Left colon (tissue), 2 donors: ENCODE measurements at regions of chr14 and their contacts with region 1.

Region 1: DNA sequence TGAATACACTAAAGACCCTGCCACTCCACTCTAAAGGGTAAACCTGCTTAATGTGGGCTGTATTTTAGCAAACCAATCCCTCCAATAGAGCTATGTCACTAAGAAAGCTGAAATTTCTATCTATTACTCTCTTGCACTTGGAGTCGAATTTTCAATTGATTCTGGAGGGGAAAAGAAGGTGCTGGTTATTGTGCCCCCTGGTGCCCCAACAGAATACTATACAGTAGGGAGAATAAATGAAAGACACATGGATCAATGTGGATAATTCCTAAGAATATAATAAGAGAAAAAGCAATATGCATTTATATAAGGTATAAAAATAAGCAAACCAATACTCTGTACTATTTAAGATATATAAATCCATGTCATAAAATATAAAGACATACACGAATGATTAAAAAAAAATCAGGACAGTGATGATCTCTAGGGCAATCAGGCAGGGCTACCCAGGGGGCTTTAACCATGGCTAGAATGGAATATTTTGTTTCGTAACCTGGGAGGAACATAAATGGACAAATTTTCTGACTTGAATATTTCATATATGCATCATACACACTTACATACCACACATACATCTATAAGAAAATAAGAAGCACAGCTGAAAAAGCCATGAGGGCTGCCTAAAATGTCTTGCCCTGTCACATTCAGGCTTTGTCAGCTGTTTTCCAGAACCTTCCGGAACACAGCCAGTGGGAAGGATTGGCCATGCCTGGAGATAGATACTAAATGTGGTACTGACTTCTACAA is 54.4 kb downstream of the EFCAB11 start:
- DNase-seq: no peak
- ATAC-seq: peak; percentile 59

Region 2: DNA sequence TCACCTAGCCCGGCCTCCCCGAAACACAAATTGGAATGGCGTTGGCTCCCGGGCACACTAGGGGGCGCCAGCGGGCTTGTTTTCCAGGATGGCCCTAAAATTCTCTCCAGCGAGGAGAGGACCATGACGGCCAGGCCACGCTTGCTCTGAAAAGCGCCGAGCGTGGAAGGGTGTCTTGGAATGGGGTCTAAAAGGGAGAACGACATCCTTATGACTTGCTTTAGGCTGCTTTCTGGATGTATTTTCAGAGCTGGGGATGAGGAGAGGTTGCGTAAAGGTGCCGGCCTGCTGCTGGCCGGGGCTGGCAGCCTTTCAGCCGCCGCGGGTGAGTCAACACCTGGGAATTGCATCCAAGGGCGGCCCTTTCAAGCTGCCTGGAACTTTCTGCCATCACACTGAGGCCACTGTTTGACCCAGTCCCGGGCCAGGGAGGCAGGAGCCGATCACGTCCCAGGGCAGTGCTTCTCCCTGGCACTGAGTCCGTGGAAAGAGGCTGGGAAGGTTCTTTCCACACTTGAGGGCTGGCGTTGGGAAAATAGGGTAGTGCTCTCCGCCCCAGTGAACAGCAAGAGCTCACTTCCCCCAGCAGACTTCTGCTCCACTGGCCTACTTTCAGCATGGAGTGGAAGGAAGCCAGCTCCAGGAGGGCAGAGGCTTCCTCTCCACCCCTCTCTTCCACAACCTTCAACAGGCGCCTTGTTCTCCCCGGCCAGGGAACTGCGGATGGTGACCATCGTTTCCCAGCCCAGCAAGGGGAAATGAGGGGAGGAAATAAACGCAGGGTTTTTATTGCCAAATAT is 859.4 kb before region 1 on chr14:
- intact Hi-C with region 1: loop called in 1 of 2 experiments (anchors 5 kb)
- DNase-seq: peak; percentile 82 to 90
- ATAC-seq: peak; percentile 93

Region 3: GRCh38 chr14:90168425-90169105 is 268.5 kb after region 1 on chr14:
- intact Hi-C with region 1: no loop called
- DNase-seq: no peak
- ATAC-seq: no peak